ENCODE measurements at regions of chr7 and their contacts with region 1.

Region 1: DNA sequence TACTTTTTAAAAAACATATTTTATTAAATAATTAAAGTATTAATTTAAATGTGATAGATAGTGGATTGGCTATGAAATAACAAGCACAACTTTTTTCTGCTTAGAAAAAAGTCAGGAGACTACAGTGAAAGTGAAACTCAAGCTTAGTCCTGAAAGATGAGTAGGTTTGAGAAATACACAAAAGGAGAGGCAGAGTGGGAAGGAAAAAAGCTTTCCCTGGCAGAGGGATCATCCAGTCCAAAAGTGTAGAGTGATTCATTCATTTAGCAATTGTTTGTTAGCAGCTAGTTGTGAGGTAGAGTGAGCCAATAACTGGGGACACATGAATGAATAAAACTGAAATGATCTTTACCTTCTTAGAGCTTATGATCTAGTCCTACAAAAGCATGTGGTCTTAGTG is 93.5 kb downstream of the FOXP2 start:
- DNase-seq: no peak
- H3K4me3 ChIP-seq: no peak overlapping the region
- H3K27ac ChIP-seq: peak overlapping the region in 2 of 4 donors; percentile 47 to 60
- H3K4me1 ChIP-seq: peaks cover 0 to 23% (median 4%) of the 10 kb centered on the region in 4 donors
- H3K27me3 ChIP-seq: no peaks in the 10 kb centered on the region
- CTCF ChIP-seq: no peak
- EP300 ChIP-seq: no peak
- POLR2A ChIP-seq: no peak

Region 2: GRCh38 chr7:114426382-114427223 is 81.5 kb before region 1 on chr7:
- intact Hi-C with region 1: loop called (anchors 5 kb)
- DNase-seq: no peak
- H3K4me3 ChIP-seq: no peak overlapping the region
- H3K27ac ChIP-seq: no peak overlapping the region
- H3K4me1 ChIP-seq: peaks cover 0 to 98% (median 58%) of the 10 kb centered on the region in 4 donors
- H3K27me3 ChIP-seq: no peaks in the 10 kb centered on the region
- CTCF ChIP-seq: peak in 3 of 4 experiments; percentile 25 to 39 (median 36)
- EP300 ChIP-seq: no peak
- POLR2A ChIP-seq: no peak